Breast epithelium (tissue), 4 donors: ENCODE measurements at regions of chr3 and their contacts with region 1.

Region 1: DNA sequence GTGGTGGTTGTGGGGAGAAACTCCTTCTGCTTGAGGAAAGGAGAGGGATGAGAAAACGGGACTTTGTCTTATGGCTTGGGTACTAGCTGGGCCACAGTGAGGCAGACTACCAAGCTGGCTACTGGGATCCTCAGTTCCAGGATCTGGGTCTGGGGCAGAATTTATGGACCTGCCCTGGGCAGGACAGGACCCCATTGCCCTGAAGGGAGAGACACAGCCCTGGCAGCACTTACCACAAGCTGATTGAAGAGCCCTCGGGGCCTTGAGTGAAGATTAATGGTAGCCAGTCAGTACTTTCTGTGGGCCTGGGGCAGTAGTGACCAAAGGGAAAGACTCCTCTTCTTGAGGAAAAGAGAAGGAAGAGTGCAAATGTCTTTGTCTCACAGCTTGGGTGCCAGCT is 799.7 kb downstream of the SI start:
- DNase-seq: no peak
- H3K4me3 ChIP-seq: no peak overlapping the region
- H3K27ac ChIP-seq: no peak overlapping the region
- H3K4me1 ChIP-seq: no peaks in the 10 kb centered on the region
- H3K27me3 ChIP-seq: no peaks in the 10 kb centered on the region
- CTCF ChIP-seq: no peak
- POLR2A ChIP-seq: no peak

Region 2: DNA sequence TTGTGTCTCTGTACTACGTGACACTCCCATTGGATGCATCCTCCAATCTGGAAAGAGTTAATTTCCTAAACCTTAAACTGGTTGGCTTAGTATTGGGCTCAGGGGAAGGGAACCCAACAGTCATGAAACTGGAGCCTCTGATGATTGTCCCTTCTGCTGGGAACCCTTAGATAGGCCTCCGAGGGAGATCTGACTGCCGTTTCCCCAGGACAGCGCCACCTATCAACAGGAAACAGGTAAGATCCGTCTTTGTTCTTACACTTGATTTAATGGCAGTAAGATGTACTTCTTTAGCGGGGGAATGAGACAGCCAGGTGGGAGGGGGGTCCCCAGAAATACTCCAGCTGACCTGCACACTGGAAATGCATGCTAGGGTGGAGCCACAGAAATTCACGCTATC is 949.9 kb before region 1 on chr3:
- intact Hi-C with region 1: loop called (anchors 5 kb)
- DNase-seq: no peak
- H3K4me3 ChIP-seq: no peak overlapping the region
- H3K27ac ChIP-seq: no peak overlapping the region
- H3K4me1 ChIP-seq: no peaks in the 10 kb centered on the region
- H3K27me3 ChIP-seq: no peaks in the 10 kb centered on the region
- CTCF ChIP-seq: no peak
- POLR2A ChIP-seq: no peak